ENCODE measurements at regions of chr4 and their contacts with region 1.

Region 1: DNA sequence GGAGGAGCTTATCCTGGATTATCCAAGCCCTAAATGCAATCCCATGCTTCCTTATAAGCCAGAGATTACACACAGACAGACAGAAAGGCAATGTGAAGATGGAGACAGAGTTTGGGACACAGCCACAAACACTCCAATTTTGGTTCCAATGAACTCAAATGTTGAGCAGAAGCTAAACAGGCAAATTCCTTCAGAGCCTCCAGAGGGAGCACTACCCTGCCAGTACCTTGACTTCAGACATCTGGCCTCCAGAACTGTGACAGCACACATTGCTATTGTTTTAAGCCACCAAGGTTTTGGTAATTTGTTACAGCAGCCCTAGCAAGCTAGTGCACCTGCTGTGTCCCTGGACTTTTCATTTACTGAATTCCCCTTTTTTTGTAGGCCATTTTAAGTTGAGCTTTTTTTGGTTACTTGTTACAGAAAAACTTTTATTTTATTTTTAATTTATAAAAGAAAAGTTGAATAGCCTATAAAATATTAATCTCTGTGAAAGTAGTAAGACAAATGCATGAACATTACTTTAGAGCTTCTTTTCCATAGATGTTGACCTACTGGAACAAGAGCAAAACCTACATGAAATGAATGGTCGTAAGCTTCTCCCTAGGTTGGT is 33.4 kb upstream of the SRD5A3 start:
- DNase-seq: no peak
- ATAC-seq: no peak
- H3K4me3 Mint-ChIP-seq: no peak overlapping the region
- H3K27ac Mint-ChIP-seq: no peak overlapping the region
- H3K4me1 Mint-ChIP-seq: no peaks in the 10 kb centered on the region
- H3K27me3 Mint-ChIP-seq: peaks cover 6% of the 10 kb centered on the region
- CTCF ChIP-seq: no peak

Region 2: GRCh38 chr4:55242506-55242905 is 70.1 kb before region 1 on chr4:
- CTCF ChIA-PET with region 1: no interaction called
- POLR2A ChIA-PET with region 1: no interaction called
- intact Hi-C with region 1: no loop called
- DNase-seq: no peak
- ATAC-seq: no peak
- H3K4me3 Mint-ChIP-seq: no peak overlapping the region
- H3K27ac Mint-ChIP-seq: no peak overlapping the region
- H3K4me1 Mint-ChIP-seq: no peaks in the 10 kb centered on the region
- H3K27me3 Mint-ChIP-seq: peaks cover 8% of the 10 kb centered on the region
- CTCF ChIP-seq: no peak

Region 3: GRCh38 chr4:55416176-55416575 is 103.6 kb after region 1 on chr4:
- CTCF ChIA-PET with region 1: no interaction called
- POLR2A ChIA-PET with region 1: no interaction called
- intact Hi-C with region 1: no loop called
- DNase-seq: no peak
- ATAC-seq: no peak
- H3K4me3 Mint-ChIP-seq: no peak overlapping the region
- H3K27ac Mint-ChIP-seq: no peak overlapping the region
- H3K4me1 Mint-ChIP-seq: no peaks in the 10 kb centered on the region
- H3K27me3 Mint-ChIP-seq: no peaks in the 10 kb centered on the region
- CTCF ChIP-seq: no peak

Region 4: DNA sequence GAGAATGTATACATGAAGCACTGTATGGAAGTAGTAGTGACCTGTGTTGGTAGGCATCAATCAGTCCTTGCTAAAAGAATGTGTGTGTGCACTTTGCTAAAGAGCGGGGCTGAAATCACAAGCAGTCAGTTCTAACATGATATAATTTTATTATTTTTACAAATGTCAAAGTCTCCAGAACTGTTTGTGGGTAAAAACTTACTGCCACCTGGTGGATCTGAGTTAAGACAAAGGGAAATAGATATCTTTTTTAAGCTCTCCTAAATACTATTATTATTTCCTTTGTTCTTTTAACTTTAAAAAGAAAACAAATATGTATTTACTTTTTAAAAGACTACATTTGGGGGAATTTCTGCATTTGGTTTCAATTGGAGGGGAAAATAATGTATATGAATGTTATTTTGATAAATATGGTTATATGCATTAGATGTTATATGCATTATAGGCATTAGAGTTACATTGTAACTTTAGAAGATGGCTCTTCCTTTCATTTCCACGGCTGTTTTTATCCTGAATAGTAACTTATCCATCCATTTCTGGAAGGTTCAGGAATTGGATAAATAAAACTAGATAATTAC is 241.9 kb after region 1 on chr4:
- CTCF ChIA-PET with region 1: interaction called, 4 read pairs
- POLR2A ChIA-PET with region 1: no interaction called
- intact Hi-C with region 1: loop called (anchors 2 kb)
- DNase-seq: no peak
- ATAC-seq: no peak
- H3K4me3 Mint-ChIP-seq: no peak overlapping the region
- H3K27ac Mint-ChIP-seq: no peak overlapping the region
- H3K4me1 Mint-ChIP-seq: peaks cover 3% of the 10 kb centered on the region
- H3K27me3 Mint-ChIP-seq: peaks cover 11% of the 10 kb centered on the region
- CTCF ChIP-seq: no peak

Region 5: GRCh38 chr4:55736605-55737183 is 424.1 kb after region 1 on chr4:
- CTCF ChIA-PET with region 1: no interaction called
- POLR2A ChIA-PET with region 1: no interaction called
- intact Hi-C with region 1: loop called (anchors 1 kb)
- DNase-seq: no peak
- ATAC-seq: no peak
- H3K4me3 Mint-ChIP-seq: no peak overlapping the region
- H3K27ac Mint-ChIP-seq: no peak overlapping the region
- H3K4me1 Mint-ChIP-seq: no peaks in the 10 kb centered on the region
- H3K27me3 Mint-ChIP-seq: peaks cover 32% of the 10 kb centered on the region
- CTCF ChIP-seq: no peak

Region 6: GRCh38 chr4:55866973-55867574 is 554.5 kb after region 1 on chr4:
- CTCF ChIA-PET with region 1: interaction called, 7 read pairs
- POLR2A ChIA-PET with region 1: no interaction called
- intact Hi-C with region 1: loop called (anchors 1 kb)
- DNase-seq: no peak
- ATAC-seq: peak; percentile 84
- H3K4me3 Mint-ChIP-seq: no peak overlapping the region
- H3K27ac Mint-ChIP-seq: no peak overlapping the region
- H3K4me1 Mint-ChIP-seq: peaks cover 22% of the 10 kb centered on the region
- H3K27me3 Mint-ChIP-seq: no peaks in the 10 kb centered on the region
- CTCF ChIP-seq: no peak